WTC11 (cell line): ENCODE measurements at regions of chr17 and their contacts with region 1.

Region 1: DNA sequence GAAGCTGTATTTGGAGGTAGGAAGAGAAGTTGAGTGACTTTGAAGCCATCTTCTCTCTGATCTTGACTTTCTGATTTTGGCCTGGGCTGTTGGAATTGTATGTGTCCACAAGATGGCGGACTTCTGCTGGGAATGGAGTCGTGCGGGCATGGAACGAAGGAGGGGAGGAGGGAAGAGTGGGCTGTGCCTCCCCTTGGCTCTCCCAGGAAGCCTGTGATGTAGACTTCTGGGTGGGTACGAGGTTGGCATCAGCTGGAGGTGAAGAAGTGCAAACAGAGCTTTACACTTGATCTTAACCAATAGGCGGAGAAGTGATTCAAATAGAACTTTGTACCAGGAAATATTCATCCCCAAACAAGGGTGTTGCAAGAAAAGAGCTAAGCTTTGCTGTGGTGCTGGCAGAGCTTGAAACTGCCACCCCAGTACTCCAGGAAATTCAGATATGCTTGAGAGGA is 7.4 kb upstream of the TMEM220 start:
- DNase-seq: peak; percentile 60
- ATAC-seq: peak; percentile 92
- H3K4me3 Mint-ChIP-seq: no peak overlapping the region
- H3K27ac Mint-ChIP-seq: no peak overlapping the region
- H3K4me1 Mint-ChIP-seq: peaks cover 21% of the 10 kb centered on the region
- H3K27me3 Mint-ChIP-seq: no peaks in the 10 kb centered on the region
- CTCF ChIP-seq: peak; percentile 26; the same call in 1 of the 2 replicates

Region 2: DNA sequence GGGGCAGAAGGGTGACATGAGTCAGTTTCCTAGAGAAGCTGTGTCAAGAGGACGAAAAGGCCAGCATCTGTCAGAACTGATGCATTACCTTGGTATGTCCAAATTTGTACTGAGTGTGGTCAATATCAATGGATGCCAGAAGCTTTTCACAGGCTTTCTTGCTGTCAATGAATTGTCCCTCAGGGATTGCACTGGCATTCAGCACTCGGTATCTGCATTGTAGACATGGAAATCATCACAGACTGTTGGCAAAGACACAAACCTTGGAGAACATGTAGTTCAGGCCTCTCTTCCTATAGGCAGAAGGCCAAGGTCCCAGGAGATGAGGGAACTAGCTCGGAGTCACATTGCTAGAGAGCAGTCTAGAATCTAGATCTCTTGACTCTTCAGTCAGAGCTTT is 96.7 kb before region 1 on chr17:
- CTCF ChIA-PET with region 1: no interaction called
- POLR2A ChIA-PET with region 1: no interaction called
- DNase-seq: no peak
- ATAC-seq: no peak
- H3K4me3 Mint-ChIP-seq: no peak overlapping the region
- H3K27ac Mint-ChIP-seq: no peak overlapping the region
- H3K4me1 Mint-ChIP-seq: no peaks in the 10 kb centered on the region
- H3K27me3 Mint-ChIP-seq: no peaks in the 10 kb centered on the region
- CTCF ChIP-seq: no peak

Region 3: DNA sequence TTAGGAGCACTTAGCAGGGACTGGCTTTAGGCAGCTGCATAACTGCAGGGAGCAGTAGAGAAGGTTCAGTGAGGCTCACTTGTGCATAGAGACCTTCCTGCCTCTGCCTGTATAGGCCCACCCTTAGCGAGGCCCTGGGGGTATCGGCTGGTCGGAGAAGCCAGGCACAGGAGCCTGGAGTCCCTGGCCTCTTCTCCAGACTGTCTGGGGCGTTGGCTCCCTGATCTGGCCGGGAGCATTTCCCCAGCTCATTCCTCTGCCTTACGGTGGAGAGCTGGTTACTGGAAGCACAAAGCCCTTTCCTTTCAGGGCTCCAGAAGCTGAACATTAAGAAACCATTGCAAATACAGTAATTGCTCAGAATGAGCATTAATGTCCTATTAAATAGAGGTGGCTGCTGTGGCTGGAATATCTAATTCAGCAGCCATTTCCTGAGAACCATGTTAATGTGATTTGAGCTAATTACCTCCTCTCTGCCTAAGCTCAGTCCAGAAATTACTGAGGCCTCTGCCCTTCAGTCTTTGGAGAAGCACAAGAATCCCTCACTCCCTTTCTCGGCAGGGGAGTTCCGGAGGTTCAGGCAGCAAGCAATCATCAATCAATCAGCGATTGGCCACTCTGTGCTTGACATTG is 11.5 kb after region 1 on chr17:
- CTCF ChIA-PET with region 1: interaction called, 20 read pairs
- POLR2A ChIA-PET with region 1: no interaction called
- DNase-seq: no peak
- ATAC-seq: peak; percentile 69
- H3K4me3 Mint-ChIP-seq: no peak overlapping the region
- H3K27ac Mint-ChIP-seq: no peak overlapping the region
- H3K4me1 Mint-ChIP-seq: peaks cover 19% of the 10 kb centered on the region
- H3K27me3 Mint-ChIP-seq: no peaks in the 10 kb centered on the region
- CTCF ChIP-seq: no peak

Region 4: GRCh38 chr17:10754109-10754508 is 16.9 kb after region 1 on chr17:
- CTCF ChIA-PET with region 1: interaction called, 20 read pairs
- POLR2A ChIA-PET with region 1: no interaction called
- DNase-seq: peak; percentile 80
- ATAC-seq: peak; percentile 48
- H3K4me3 Mint-ChIP-seq: no peak overlapping the region; the same call in 1 of the 2 replicates
- H3K27ac Mint-ChIP-seq: no peak overlapping the region
- H3K4me1 Mint-ChIP-seq: peaks cover 54% of the 10 kb centered on the region
- H3K27me3 Mint-ChIP-seq: no peaks in the 10 kb centered on the region
- CTCF ChIP-seq: 0 out of 2 replicates have a peak, but pooled peaks have one; percentile 18